Activated T-helper 2 cell treated with anti-CD3 and anti-CD28 coated beads, Interferon-gamma antibody, Interleukin-2, Interleukin-4, amounts not matched to agents 10 μg/mL and 5 μg/mL and 100 μg/mL, durations not matched to agents 14 hours and 24 hours and 36 hours (primary cell): ENCODE measurements at regions of chr10 and their contacts with region 1.

Region 1: DNA sequence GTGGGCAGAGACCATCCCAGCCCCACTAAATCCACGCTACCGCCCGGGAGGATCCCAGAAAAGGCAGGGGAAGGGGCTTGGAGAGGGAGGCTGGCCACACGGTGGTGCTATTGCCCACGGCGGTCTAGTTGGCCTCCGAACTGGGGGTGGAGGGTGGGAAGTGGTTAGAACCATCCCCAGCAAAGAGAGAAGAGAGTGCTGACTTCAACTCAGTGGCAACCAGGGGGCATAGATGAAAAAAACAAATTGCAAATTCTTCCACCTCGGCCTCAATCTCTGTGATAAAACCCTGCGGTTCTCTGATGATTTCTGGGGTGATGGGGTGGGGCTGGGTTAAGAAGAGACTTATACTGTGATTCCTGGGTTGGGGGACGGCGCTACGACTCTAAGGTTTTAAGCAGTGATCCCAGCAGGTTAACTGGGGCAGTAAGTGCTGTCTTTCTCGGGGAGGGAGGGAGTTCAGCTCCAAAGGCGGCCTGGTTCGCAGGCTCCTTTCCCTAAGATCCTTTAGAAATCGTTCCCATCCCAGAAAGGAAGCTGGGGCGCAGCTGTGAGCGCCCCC is 154.5 kb upstream of the LYZL2 start:
- DNase-seq: peak; percentile 74
- H3K4me3 Mint-ChIP-seq: peak overlapping the region; percentile 75
- H3K27ac Mint-ChIP-seq: peak overlapping the region; percentile 60
- H3K4me1 Mint-ChIP-seq: peaks cover 31% of the 10 kb centered on the region
- H3K27me3 Mint-ChIP-seq: peaks cover 5% of the 10 kb centered on the region

Region 2: GRCh38 chr10:30600005-30600404 is 184.0 kb before region 1 on chr10:
- intact Hi-C with region 1: no loop called
- DNase-seq: no peak
- H3K4me3 Mint-ChIP-seq: no peak overlapping the region
- H3K27ac Mint-ChIP-seq: no peak overlapping the region
- H3K4me1 Mint-ChIP-seq: peaks cover 6% of the 10 kb centered on the region
- H3K27me3 Mint-ChIP-seq: peaks cover 3% of the 10 kb centered on the region

Region 3: DNA sequence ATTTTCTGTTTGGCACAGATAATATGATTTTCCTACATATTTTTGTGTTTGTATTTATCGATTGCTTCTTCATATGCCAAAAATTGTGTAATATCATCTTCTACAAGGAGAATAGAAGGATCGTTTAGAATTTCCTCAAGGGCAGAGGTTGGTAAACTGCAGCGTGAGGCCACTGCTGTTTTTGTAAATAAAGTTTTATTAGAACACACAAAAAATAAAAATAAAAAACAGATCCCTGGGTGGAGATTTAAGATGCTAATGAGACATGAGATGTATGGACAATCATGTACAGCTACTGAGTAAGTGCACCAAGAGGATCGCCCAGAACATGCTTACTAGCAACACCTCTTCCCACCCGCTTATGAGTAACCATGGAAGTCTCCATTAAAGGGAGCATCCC is 164.1 kb before region 1 on chr10:
- intact Hi-C with region 1: no loop called
- DNase-seq: no peak
- H3K4me3 Mint-ChIP-seq: no peak overlapping the region
- H3K27ac Mint-ChIP-seq: no peak overlapping the region
- H3K4me1 Mint-ChIP-seq: no peaks in the 10 kb centered on the region
- H3K27me3 Mint-ChIP-seq: peaks cover 23% of the 10 kb centered on the region

Region 4: DNA sequence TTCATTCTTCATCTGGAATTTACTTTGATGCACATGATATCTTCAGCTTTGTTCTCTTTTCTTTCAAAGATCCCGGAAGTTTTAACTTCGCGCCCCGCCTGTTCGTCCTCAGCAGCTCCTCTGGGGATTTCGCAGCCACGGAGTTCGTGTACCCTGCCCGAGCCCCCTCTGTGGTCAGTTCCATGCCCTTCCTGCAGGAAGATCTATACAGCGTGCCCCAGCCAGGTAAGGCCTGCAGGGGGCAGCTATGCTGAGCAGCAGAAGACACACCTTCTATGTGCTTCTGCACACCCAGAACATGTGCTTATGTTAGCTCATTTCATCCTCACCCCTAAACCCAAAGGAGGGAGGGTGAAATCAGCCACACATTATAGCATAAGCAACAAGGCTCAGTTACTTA is 74.8 kb before region 1 on chr10:
- intact Hi-C with region 1: no loop called
- DNase-seq: no peak
- H3K4me3 Mint-ChIP-seq: no peak overlapping the region
- H3K27ac Mint-ChIP-seq: peak overlapping the region; percentile 57
- H3K4me1 Mint-ChIP-seq: peaks cover 28% of the 10 kb centered on the region
- H3K27me3 Mint-ChIP-seq: no peaks in the 10 kb centered on the region

Region 5: DNA sequence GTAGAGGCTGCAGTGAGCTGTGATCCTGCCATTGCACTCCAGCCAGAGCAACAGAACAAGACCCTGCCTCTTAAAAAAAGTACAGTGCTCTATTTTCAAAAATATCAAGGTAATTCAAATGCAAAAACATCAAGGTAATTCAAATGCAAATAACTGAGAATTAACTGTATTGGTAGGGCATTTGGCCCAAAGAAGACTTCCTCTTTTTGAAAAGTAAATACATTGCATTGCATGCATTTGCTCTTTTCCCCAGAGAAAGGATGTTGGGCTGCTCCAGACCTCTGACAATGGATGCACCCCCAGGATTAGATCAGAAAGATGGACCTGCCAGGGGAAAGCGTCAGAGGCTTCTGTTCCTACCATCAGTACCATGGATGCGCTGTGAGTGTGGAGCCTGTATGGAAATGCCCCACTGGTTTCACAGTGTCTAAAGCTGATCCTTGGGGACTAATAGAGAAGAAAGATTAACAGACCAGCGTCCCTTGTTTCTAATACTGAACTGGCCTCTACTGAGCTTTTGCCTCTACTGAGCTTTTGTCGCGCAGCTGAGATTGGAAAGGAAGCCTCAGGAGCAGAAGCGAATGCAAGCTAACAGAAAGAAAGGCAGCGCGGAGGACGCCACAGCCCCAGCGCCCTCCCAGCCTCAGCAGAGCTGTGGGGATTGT is 60.9 kb before region 1 on chr10:
- intact Hi-C with region 1: loop called (anchors 5 kb)
- DNase-seq: no peak
- H3K4me3 Mint-ChIP-seq: no peak overlapping the region
- H3K27ac Mint-ChIP-seq: no peak overlapping the region
- H3K4me1 Mint-ChIP-seq: peaks cover 27% of the 10 kb centered on the region
- H3K27me3 Mint-ChIP-seq: no peaks in the 10 kb centered on the region

Region 6: DNA sequence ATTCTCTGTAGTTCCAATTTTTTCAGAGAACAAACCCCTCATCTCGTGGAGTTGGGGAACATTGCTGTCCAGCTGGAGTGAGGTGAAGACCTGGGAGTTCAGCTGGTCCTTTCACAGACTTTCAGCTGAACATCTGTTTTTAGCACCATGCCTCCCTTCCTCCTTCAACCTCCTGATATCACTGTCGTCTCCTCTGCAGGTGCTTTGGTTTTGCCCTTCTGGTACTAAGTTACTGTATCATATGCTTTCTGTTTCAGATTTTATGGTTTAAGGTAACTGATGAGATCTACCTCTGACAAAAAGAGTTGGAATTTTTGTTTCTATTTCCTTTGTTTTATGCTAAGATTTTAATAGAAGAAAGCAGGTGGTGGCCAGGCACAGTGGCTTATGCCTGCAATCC is 144.7 kb after region 1 on chr10:
- intact Hi-C with region 1: no loop called
- DNase-seq: no peak
- H3K4me3 Mint-ChIP-seq: peak overlapping the region; percentile 67
- H3K27ac Mint-ChIP-seq: peak overlapping the region; percentile 53
- H3K4me1 Mint-ChIP-seq: peaks cover 12% of the 10 kb centered on the region
- H3K27me3 Mint-ChIP-seq: no peaks in the 10 kb centered on the region

Region 7: DNA sequence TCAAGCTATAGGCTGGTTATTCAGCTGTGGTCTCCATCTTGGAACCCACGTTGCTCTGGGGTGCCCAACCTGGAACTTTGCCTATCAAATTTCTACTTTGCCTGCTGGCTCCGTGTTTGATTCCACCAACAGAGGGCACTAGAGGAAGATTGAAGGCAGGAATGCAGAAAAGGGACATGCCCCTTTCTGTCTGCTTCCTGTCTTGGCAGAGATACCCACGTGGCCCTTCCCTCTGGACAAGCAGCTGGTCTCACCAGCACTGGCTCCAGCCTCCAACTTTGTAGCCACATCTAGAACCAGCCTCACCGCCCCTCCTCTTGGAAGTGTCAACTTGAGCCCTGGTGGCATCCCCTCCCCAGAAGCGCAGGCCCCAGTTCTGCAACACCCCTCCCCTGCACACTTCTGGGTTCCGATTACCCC is 299.8 kb after region 1 on chr10:
- intact Hi-C with region 1: loop called (anchors 2 kb)
- DNase-seq: peak; percentile 55
- H3K4me3 Mint-ChIP-seq: no peak overlapping the region
- H3K27ac Mint-ChIP-seq: no peak overlapping the region
- H3K4me1 Mint-ChIP-seq: peaks cover 13% of the 10 kb centered on the region
- H3K27me3 Mint-ChIP-seq: no peaks in the 10 kb centered on the region

Region 8: GRCh38 chr10:31578187-31578852 is 794.3 kb after region 1 on chr10:
- intact Hi-C with region 1: loop called (anchors 10 kb)
- DNase-seq: no peak
- H3K4me3 Mint-ChIP-seq: no peak overlapping the region
- H3K27ac Mint-ChIP-seq: no peak overlapping the region
- H3K4me1 Mint-ChIP-seq: peaks cover 5% of the 10 kb centered on the region
- H3K27me3 Mint-ChIP-seq: peaks cover 7% of the 10 kb centered on the region

Region 9: GRCh38 chr10:31759799-31760626 is 976.0 kb after region 1 on chr10:
- intact Hi-C with region 1: loop called (anchors 5 kb)
- DNase-seq: peak; percentile 90
- H3K4me3 Mint-ChIP-seq: peak overlapping the region; percentile 82
- H3K27ac Mint-ChIP-seq: peak overlapping the region; percentile 78
- H3K4me1 Mint-ChIP-seq: peaks cover 13% of the 10 kb centered on the region
- H3K27me3 Mint-ChIP-seq: no peaks in the 10 kb centered on the region